ENCODE measurements at regions of chr3 and their contacts with region 1.

Region 1: DNA sequence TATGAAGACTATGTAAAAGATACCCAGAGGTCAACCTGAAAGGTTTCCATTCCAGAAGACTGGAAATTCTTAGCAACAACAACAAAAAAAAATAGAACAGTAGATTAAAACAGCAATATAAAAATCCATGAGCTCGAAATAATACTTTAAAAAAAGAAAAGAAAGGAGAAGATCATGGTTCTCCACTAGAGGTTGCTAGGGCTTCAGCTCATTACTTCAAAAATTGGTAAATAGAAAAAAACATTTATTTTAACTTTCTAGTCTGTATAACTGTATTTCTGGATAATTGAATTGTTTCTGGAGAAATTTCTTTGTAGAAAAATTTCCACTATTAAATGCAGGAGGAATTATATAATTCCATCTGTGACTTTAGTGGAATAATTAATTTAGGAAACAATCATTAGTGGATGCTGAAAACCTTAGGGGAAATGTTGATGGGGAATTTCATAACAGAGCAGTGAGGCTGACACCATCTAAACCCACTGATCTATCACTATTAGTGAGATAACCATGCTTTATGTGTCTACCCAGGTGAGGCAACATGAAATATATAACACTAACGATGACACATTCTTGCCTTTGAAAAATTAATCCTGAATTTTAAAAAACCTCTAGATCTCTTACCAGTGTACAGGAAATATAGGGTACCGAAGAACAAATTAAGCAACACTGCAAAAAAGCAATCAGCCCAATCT is 62.5 kb upstream of the SNRK start:
- DNase-seq: peak in 2 of 9 experiments; percentile 50 to 58
- ATAC-seq: peak; percentile 30
- H3K4me3 ChIP-seq: no peak overlapping the region
- H3K4me3 Mint-ChIP-seq: no peak overlapping the region
- H3K27ac ChIP-seq: no peak overlapping the region
- H3K27ac Mint-ChIP-seq: peak overlapping the region; percentile 81
- H3K4me1 ChIP-seq: peaks cover 58% of the 10 kb centered on the region
- H3K4me1 Mint-ChIP-seq: peaks cover 64% of the 10 kb centered on the region
- H3K27me3 ChIP-seq: no peaks in the 10 kb centered on the region
- H3K27me3 Mint-ChIP-seq: no peaks in the 10 kb centered on the region
- CTCF ChIP-seq: peak; percentile 78

Region 2: DNA sequence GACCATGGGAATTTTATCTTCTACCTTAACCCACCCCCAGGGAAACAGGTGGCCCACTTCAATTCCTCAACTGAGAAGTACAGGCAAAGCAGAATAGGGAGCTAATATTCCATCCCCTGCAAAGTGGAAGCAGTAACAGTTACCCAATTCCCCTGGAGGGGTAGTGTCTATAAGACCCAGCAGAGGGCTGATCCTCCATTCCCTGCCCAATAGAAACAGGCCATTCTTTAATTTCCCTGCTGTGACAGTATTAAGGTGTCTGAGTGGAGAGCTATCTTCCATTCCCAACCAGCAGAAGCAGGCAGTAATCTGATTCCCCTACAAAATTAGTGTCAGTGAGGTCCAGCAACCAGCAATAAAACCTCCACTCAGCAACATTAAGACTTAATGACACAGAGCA is 1481.7 kb before region 1 on chr3:
- CTCF ChIA-PET with region 1: no interaction called
- POLR2A ChIA-PET with region 1: no interaction called
- intact Hi-C with region 1: no loop called
- DNase-seq: no peak
- ATAC-seq: no peak
- H3K4me3 ChIP-seq: no peak overlapping the region
- H3K4me3 Mint-ChIP-seq: no peak overlapping the region
- H3K27ac ChIP-seq: no peak overlapping the region
- H3K27ac Mint-ChIP-seq: no peak overlapping the region
- H3K4me1 ChIP-seq: no peaks in the 10 kb centered on the region
- H3K4me1 Mint-ChIP-seq: no peaks in the 10 kb centered on the region
- H3K27me3 ChIP-seq: no peaks in the 10 kb centered on the region
- H3K27me3 Mint-ChIP-seq: no peaks in the 10 kb centered on the region
- CTCF ChIP-seq: no peak

Region 3: GRCh38 chr3:43155464-43156121 is 68.2 kb before region 1 on chr3:
- CTCF ChIA-PET with region 1: interaction called, 51 read pairs
- POLR2A ChIA-PET with region 1: interaction called, 5 read pairs
- intact Hi-C with region 1: no loop called
- DNase-seq: no peak
- ATAC-seq: no peak
- H3K4me3 ChIP-seq: no peak overlapping the region
- H3K4me3 Mint-ChIP-seq: peak overlapping the region; percentile 0
- H3K27ac ChIP-seq: no peak overlapping the region
- H3K27ac Mint-ChIP-seq: peak overlapping the region; percentile 83
- H3K4me1 ChIP-seq: peaks cover 15% of the 10 kb centered on the region
- H3K4me1 Mint-ChIP-seq: peaks cover 36% of the 10 kb centered on the region
- H3K27me3 ChIP-seq: no peaks in the 10 kb centered on the region
- H3K27me3 Mint-ChIP-seq: peaks cover 2% of the 10 kb centered on the region
- CTCF ChIP-seq: no peak

Region 4: DNA sequence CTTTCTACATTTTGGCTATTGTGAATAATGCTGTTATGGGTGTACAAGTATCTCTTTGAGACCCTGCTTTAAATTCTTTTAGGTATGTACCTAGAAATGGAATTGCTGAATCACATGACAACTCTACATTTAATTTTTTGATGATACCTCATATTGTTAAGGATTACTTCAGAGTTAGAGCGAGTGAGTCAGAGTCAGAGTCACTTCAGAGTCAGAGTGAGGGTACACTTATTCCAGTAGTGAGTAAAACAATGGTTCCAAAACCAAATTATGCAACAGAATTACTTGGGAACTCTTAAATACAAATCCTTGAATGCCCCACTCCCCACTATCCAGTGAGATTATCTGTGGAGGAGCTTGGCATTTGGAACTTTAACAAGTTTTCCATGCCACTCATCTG is 12.2 kb after region 1 on chr3:
- CTCF ChIA-PET with region 1: interaction called, 10 read pairs
- POLR2A ChIA-PET with region 1: interaction called, 3 read pairs
- intact Hi-C with region 1: loop called in 1 of 2 experiments (anchors 2 kb)
- DNase-seq: no peak
- ATAC-seq: no peak
- H3K4me3 ChIP-seq: no peak overlapping the region
- H3K4me3 Mint-ChIP-seq: no peak overlapping the region
- H3K27ac ChIP-seq: no peak overlapping the region
- H3K27ac Mint-ChIP-seq: no peak overlapping the region
- H3K4me1 ChIP-seq: peaks cover 3% of the 10 kb centered on the region
- H3K4me1 Mint-ChIP-seq: peaks cover 29% of the 10 kb centered on the region
- H3K27me3 ChIP-seq: no peaks in the 10 kb centered on the region
- H3K27me3 Mint-ChIP-seq: no peaks in the 10 kb centered on the region
- CTCF ChIP-seq: no peak

Region 5: GRCh38 chr3:43870120-43870519 is 646.3 kb after region 1 on chr3:
- CTCF ChIA-PET with region 1: no interaction called
- POLR2A ChIA-PET with region 1: no interaction called
- intact Hi-C with region 1: no loop called
- DNase-seq: no peak
- ATAC-seq: no peak
- H3K4me3 ChIP-seq: no peak overlapping the region
- H3K4me3 Mint-ChIP-seq: no peak overlapping the region
- H3K27ac ChIP-seq: no peak overlapping the region
- H3K27ac Mint-ChIP-seq: no peak overlapping the region
- H3K4me1 ChIP-seq: no peaks in the 10 kb centered on the region
- H3K4me1 Mint-ChIP-seq: no peaks in the 10 kb centered on the region
- H3K27me3 ChIP-seq: no peaks in the 10 kb centered on the region
- H3K27me3 Mint-ChIP-seq: peaks cover 25% of the 10 kb centered on the region
- CTCF ChIP-seq: no peak

Measured in CD8-positive, alpha-beta T cell (primary cell).